GM12878 (cell line): ENCODE measurements at regions of chr6 and their contacts with region 1.

Region 1: GRCh38 chr6:17494177-17494576 is 100.8 kb downstream of the CAP2 start:
- DNase-seq: no peak
- ATAC-seq: no peak
- H3K4me3 ChIP-seq: no peak overlapping the region
- H3K27ac ChIP-seq: no peak overlapping the region
- H3K4me1 ChIP-seq: no peaks in the 10 kb centered on the region
- H3K27me3 ChIP-seq: 0 out of 4 replicates have a peak, but pooled peaks cover 0 to 1% of the 10 kb centered on the region in 2 experiments
- CTCF ChIP-seq: no peak
- EP300 ChIP-seq: no peak
- POLR2A ChIP-seq: no peak
- RAD21 ChIP-seq: no peak

Region 2: DNA sequence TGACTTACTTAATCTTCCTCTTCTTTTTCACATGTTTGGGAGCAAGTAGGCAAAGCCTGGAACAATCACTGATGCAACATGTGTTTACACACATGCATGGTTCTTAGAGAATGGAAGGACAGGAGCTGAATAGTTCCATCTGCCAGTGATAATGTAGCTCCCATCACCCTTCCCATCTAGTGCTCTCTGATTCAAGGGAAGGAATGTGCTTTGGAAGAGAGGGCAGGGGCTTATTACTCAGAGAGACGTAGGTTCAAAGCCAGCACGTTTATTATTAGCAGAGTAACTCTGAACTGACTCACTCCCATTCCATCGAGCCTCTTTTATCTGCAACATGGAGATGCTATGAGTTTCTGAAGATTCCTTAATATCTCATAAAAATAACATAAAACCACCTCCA is 1043.9 kb before region 1 on chr6:
- CTCF ChIA-PET with region 1: no interaction called
- POLR2A ChIA-PET with region 1: no interaction called
- RAD21 ChIA-PET with region 1: no interaction called
- SMC1A ChIA-PET with region 1: no interaction called
- in situ Hi-C with region 1: no loop called
- intact Hi-C with region 1: no loop called
- DNase-seq: no peak
- ATAC-seq: no peak
- H3K4me3 ChIP-seq: no peak overlapping the region
- H3K27ac ChIP-seq: no peak overlapping the region
- H3K4me1 ChIP-seq: peaks cover 3% of the 10 kb centered on the region; the same call in 1 of the 2 replicates
- H3K27me3 ChIP-seq: no peaks in the 10 kb centered on the region
- CTCF ChIP-seq: no peak
- EP300 ChIP-seq: no peak
- POLR2A ChIP-seq: no peak
- RAD21 ChIP-seq: no peak

Region 3: GRCh38 chr6:17361013-17361412 is 133.2 kb before region 1 on chr6:
- CTCF ChIA-PET with region 1: no interaction called
- POLR2A ChIA-PET with region 1: no interaction called
- RAD21 ChIA-PET with region 1: no interaction called
- SMC1A ChIA-PET with region 1: no interaction called
- in situ Hi-C with region 1: no loop called
- intact Hi-C with region 1: no loop called
- DNase-seq: no peak
- ATAC-seq: peak; percentile 61
- H3K4me3 ChIP-seq: no peak overlapping the region
- H3K27ac ChIP-seq: no peak overlapping the region
- H3K4me1 ChIP-seq: no peaks in the 10 kb centered on the region
- H3K27me3 ChIP-seq: no peaks in the 10 kb centered on the region
- CTCF ChIP-seq: no peak
- EP300 ChIP-seq: no peak
- POLR2A ChIP-seq: no peak
- RAD21 ChIP-seq: no peak

Region 4: GRCh38 chr6:17478223-17478907 is 15.8 kb before region 1 on chr6:
- CTCF ChIA-PET with region 1: interaction called, 4 read pairs
- POLR2A ChIA-PET with region 1: interaction called, 3 read pairs
- RAD21 ChIA-PET with region 1: interaction called, 4 read pairs
- SMC1A ChIA-PET with region 1: interaction called, 10 read pairs
- in situ Hi-C with region 1: no loop called
- intact Hi-C with region 1: no loop called
- DNase-seq: no peak
- ATAC-seq: no peak
- H3K4me3 ChIP-seq: no peak overlapping the region
- H3K27ac ChIP-seq: no peak overlapping the region
- H3K4me1 ChIP-seq: no peaks in the 10 kb centered on the region
- H3K27me3 ChIP-seq: 0 out of 4 replicates have a peak, but pooled peaks cover 0 to 2% of the 10 kb centered on the region in 2 experiments
- CTCF ChIP-seq: no peak
- EP300 ChIP-seq: no peak
- POLR2A ChIP-seq: no peak
- RAD21 ChIP-seq: no peak

Region 5: DNA sequence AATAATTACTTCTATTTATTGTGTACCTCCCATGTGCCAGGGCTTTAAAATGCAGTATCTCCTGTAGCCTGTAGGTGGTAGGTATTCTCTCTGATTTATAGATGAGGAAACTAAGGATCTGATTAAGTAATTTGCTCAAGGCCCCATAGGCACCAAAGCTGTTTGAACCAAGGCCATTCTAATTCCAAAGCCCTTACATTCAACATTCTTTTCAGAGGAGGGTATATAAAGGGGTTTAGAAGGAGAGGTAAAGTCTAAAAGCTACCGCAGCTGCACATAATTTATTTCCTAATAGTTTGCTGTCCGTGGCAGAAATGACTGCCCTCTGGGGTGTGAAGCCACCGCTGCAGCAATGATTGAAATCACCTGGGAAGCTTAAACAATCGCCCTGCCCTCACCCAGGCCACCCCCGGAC is 10.9 kb after region 1 on chr6:
- CTCF ChIA-PET with region 1: interaction called, 19 read pairs
- POLR2A ChIA-PET with region 1: no interaction called
- RAD21 ChIA-PET with region 1: interaction called, 3 read pairs
- SMC1A ChIA-PET with region 1: interaction called, 16 read pairs
- in situ Hi-C with region 1: no loop called
- intact Hi-C with region 1: no loop called
- DNase-seq: no peak
- ATAC-seq: peak; percentile 66
- H3K4me3 ChIP-seq: no peak overlapping the region
- H3K27ac ChIP-seq: no peak overlapping the region
- H3K4me1 ChIP-seq: no peaks in the 10 kb centered on the region
- H3K27me3 ChIP-seq: no peaks in the 10 kb centered on the region
- CTCF ChIP-seq: peak; percentile 15 to 21 (median 20); a peak in 2 of 6 replicates
- EP300 ChIP-seq: no peak
- POLR2A ChIP-seq: no peak
- RAD21 ChIP-seq: peak; percentile 22; the same call in 1 of the 2 replicates